Natural killer cell (primary cell): ENCODE measurements at regions of chr7 and their contacts with region 1.

Region 1: GRCh38 chr7:141654551-141654950 is 47.4 kb downstream of the DENND11 start:
- DNase-seq: peak in 1 of 2 donors; percentile 82
- ATAC-seq: peak; percentile 83 to 87 (median 84)
- H3K4me3 ChIP-seq: no peak overlapping the region
- H3K4me3 Mint-ChIP-seq: no peak overlapping the region
- H3K27ac ChIP-seq: no peak overlapping the region
- H3K27ac Mint-ChIP-seq: peak overlapping the region; percentile 64 to 84
- H3K4me1 ChIP-seq: no peaks in the 10 kb centered on the region
- H3K4me1 Mint-ChIP-seq: peaks cover 10 to 19% of the 10 kb centered on the region in 2 donors
- H3K27me3 ChIP-seq: no peaks in the 10 kb centered on the region
- H3K27me3 Mint-ChIP-seq: no peaks in the 10 kb centered on the region
- CTCF ChIP-seq: peak; percentile 47

Region 2: GRCh38 chr7:140810830-140811556 is 843.6 kb before region 1 on chr7:
- intact Hi-C with region 1: loop called (anchors 5 kb)
- DNase-seq: peak; percentile 35 to 85
- ATAC-seq: peak; percentile 83 to 88 (median 88)
- H3K4me3 ChIP-seq: no peak overlapping the region
- H3K4me3 Mint-ChIP-seq: no peak overlapping the region
- H3K27ac ChIP-seq: no peak overlapping the region
- H3K27ac Mint-ChIP-seq: peak overlapping the region in 1 of 2 donors; percentile 16
- H3K4me1 ChIP-seq: no peaks in the 10 kb centered on the region
- H3K4me1 Mint-ChIP-seq: peaks cover 5 to 6% of the 10 kb centered on the region in 2 donors
- H3K27me3 ChIP-seq: no peaks in the 10 kb centered on the region
- H3K27me3 Mint-ChIP-seq: no peaks in the 10 kb centered on the region
- CTCF ChIP-seq: peak; percentile 76

Region 3: DNA sequence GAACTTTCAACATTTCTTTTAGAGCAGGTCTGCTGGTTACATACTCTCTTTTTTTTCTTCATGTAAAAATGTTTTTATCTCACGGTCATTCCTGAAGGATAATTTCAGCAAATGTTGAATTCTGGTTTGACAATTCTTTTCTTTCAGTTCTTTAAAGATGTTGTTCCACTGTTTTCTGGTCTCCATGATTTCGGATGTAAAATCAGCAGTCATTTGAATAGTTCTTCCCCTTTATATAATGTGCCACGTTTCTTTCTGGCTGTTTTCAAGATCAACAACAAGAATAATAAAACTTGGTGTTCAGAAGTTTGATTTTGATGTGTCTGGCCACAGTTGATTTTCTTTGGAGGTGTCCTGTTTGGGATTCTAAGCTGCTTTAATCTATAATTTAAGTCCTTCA is 625.8 kb before region 1 on chr7:
- intact Hi-C with region 1: no loop called
- DNase-seq: no peak
- ATAC-seq: no peak
- H3K4me3 ChIP-seq: no peak overlapping the region
- H3K4me3 Mint-ChIP-seq: no peak overlapping the region
- H3K27ac ChIP-seq: no peak overlapping the region
- H3K27ac Mint-ChIP-seq: no peak overlapping the region
- H3K4me1 ChIP-seq: no peaks in the 10 kb centered on the region
- H3K4me1 Mint-ChIP-seq: no peaks in the 10 kb centered on the region
- H3K27me3 ChIP-seq: peaks cover 7% of the 10 kb centered on the region
- H3K27me3 Mint-ChIP-seq: peaks cover 27 to 46% of the 10 kb centered on the region in 2 donors
- CTCF ChIP-seq: no peak

Region 4: GRCh38 chr7:141551094-141551781 is 103.3 kb before region 1 on chr7 and contains the start of gene AGK:
- intact Hi-C with region 1: loop called (anchors 10 kb)
- DNase-seq: peak; percentile 75 to 83
- ATAC-seq: peak; percentile 91 to 98 (median 97)
- H3K4me3 ChIP-seq: peak within 1 kb of the TSS; percentile 51
- H3K4me3 Mint-ChIP-seq: peak within 1 kb of the TSS; percentile 88
- H3K27ac ChIP-seq: peak within 1 kb of the TSS; percentile 65
- H3K27ac Mint-ChIP-seq: peak within 1 kb of the TSS; percentile 82 to 89
- H3K4me1 ChIP-seq: peaks cover 23% of the 10 kb centered on the region
- H3K4me1 Mint-ChIP-seq: peaks cover 44 to 46% of the 10 kb centered on the region in 2 donors
- H3K27me3 ChIP-seq: no peaks in the 10 kb centered on the region
- H3K27me3 Mint-ChIP-seq: no peaks in the 10 kb centered on the region
- CTCF ChIP-seq: no peak
- total RNA-seq, gene AGK: 70.0 to 106 (median 99.0) TPM

Region 5: DNA sequence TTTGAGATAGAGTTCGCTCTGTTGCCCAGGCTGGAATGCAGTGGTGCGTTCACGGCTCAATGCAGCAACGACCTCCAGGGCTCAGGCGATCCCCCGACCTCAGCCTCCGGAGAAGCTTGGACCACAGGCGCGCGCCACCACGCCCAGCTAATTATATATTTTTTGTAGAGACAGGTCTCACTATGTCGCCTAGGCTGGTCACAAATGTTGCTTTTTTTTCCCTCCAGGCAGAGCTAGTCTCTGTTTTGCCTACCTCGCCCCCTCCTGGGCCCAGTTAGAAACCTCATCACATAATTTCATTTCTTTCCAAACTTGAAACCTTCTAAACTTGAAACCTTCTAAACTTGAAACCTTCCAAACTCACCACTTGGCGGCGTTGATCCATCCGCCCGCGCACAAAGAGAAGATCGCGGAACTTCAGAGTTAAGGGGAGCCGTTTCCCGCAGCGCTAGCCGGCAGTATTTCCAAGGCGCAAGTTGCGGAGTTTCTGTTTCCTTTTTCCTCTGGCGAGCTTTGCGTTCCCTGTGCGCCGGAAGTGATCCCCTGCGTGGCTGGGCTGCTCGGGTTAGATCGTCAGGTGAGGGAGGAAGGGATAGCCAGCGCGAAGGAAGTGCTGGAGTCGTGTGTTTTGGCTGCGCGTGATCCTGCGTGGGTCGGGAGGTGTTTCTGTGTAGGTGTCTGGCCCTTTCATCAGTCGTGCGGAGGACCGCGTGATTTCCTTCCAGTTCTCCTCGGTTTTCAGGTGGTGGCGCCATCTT is 83.5 kb after region 1 on chr7 and contains the start of gene SSBP1:
- intact Hi-C with region 1: loop called (anchors 1 kb)
- DNase-seq: peak; percentile 80 to 97
- ATAC-seq: peak; percentile 84 to 91 (median 86)
- H3K4me3 ChIP-seq: peak within 1 kb of the TSS; percentile 81
- H3K4me3 Mint-ChIP-seq: peak within 1 kb of the TSS; percentile 100
- H3K27ac ChIP-seq: peak within 1 kb of the TSS; percentile 96
- H3K27ac Mint-ChIP-seq: peak within 1 kb of the TSS; percentile 93 to 99
- H3K4me1 ChIP-seq: peaks cover 8% of the 10 kb centered on the region
- H3K4me1 Mint-ChIP-seq: peaks cover 39 to 47% of the 10 kb centered on the region in 2 donors
- H3K27me3 ChIP-seq: no peaks in the 10 kb centered on the region
- H3K27me3 Mint-ChIP-seq: no peaks in the 10 kb centered on the region
- CTCF ChIP-seq: peak; percentile 70
- total RNA-seq, gene SSBP1: 98.7 to 112 (median 106) TPM